ENCODE measurements at regions of chr11 and their contacts with region 1.

Region 1: DNA sequence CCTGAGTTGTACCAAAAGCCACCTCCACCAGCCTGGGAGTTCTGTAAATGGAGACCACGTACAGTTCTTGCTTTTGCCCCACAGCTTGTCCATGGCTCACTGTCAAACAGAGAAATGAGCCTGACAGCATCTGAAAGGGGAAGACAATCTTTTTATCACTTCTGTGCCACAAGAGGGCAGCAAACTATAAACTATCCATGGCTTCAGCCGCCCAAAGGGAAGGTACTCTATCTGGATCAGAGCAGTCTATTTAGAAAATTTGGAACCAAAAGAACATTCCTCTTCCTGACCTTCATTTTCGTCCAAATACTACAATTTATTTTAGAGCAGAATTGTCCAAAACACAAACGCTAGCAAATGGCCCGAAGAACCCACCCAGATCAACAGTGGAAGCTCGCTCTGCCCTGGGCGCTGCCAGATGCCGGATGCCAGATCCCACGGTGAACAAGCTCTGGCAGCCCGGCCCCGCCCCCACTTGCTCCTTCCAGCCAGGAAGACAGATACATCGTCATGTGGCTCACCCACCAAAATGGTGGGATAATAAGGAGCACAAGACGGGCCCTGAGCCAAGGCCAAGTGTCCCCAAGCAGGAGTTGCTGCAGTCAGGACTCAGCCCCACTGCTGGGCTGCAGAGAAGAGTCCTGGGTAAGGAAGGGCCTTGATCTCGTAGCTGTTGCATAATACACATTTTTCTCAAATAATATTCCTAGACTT is 23.9 kb upstream of the SCGB1A1 start:
- DNase-seq: peak; percentile 75
- H3K4me3 ChIP-seq: peak overlapping the region; percentile 42 to 47 (median 42)
- H3K27ac ChIP-seq: no peak overlapping the region
- H3K4me1 ChIP-seq: peaks cover 9% of the 10 kb centered on the region
- H3K27me3 ChIP-seq: no peaks in the 10 kb centered on the region
- CTCF ChIP-seq: peak; percentile 52 to 62

Region 2: DNA sequence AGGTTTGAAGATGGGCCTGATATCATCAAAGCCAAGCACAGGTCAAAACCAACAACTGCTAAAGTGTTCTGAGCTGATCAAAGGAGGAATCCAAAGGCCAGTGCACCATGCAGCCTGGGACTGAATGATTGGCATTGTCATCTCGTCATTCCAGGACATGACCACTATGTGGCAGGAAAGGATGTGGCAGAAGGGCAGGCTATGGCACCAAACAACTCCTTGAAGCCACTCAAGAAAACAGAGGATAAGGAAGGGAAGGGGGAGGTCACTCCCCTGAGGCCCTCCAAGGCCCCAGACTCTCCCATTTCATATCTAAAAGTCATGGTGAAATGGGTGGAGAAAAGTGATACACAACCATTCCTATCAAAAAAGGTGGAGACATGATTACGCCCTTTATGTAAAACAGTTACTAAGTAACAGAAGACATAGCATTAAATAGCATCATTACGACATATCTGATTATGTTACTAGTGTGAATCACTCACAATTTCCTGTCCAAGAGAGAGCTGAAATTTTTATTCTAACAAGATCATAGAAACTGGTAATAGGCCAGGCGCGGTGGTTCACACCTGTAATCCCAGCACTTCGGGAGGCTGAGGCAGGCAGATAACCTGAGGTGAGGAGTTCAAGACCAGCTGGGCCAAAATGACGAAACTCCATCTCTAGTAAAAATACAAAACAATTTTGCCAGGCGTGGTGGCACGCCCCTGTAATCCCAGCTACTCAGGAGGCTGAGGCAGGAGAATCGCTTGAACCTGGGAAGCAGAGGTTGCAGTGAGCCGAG is 102.3 kb after region 1 on chr11:
- CTCF ChIA-PET with region 1: interaction called, 4 read pairs
- dilution Hi-C with region 1: loop called (anchors 5 kb)
- in situ Hi-C with region 1: no loop called
- intact Hi-C with region 1: no loop called
- DNase-seq: peak; percentile 84
- H3K4me3 ChIP-seq: no peak overlapping the region
- H3K27ac ChIP-seq: peak overlapping the region; percentile 66
- H3K4me1 ChIP-seq: peaks cover 35% of the 10 kb centered on the region
- H3K27me3 ChIP-seq: no peaks in the 10 kb centered on the region
- CTCF ChIP-seq: peak; percentile 44 to 63

Region 3: DNA sequence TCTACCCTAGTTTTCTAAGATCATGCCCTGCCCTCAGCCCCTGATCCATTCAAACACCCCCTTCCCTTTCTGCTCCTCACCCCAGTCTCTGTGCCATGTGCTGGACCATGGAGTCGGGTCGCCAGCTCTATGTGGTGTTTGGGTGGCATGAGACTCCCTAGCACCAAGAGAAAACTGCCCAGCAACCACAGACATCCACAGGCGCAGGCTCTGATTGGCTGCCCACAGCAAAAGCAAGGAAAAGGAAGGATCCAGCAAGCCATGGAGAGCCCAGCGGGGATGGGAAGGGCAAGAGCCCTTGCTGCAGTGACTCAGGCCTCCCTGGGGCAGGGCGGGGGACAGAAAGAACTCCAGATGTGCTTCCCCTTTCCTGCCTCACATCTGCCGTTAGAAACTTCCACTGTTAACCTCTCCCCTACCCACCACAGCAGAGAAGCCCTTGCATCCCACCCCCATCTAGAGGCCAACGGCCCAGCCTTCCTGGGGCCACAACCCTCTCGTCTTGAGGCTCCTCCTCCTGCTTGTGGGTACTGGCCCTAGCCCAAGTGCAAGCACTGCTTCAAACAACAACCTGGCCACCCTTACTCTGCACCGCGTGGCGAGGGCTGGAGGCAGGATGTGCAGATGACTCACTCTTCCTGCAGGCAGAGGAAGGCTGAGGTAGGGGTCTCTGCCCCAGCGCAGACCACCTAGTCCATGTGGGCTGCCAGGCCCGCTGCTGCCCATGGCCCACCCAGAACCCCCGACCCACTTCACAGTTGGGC is 161.3 kb after region 1 on chr11:
- CTCF ChIA-PET with region 1: interaction called, 5 read pairs
- dilution Hi-C with region 1: no loop called
- in situ Hi-C with region 1: loop called (anchors 10 kb)
- intact Hi-C with region 1: loop called (anchors 1 kb)
- DNase-seq: peak; percentile 96
- H3K4me3 ChIP-seq: peak overlapping the region; percentile 1 to 20 (median 8)
- H3K27ac ChIP-seq: peak overlapping the region; percentile 67
- H3K4me1 ChIP-seq: peaks cover 99% of the 10 kb centered on the region
- H3K27me3 ChIP-seq: no peaks in the 10 kb centered on the region
- CTCF ChIP-seq: no peak

Region 4: GRCh38 chr11:62694455-62695167 is 299.6 kb after region 1 on chr11:
- CTCF ChIA-PET with region 1: interaction called, 7 read pairs
- dilution Hi-C with region 1: no loop called
- in situ Hi-C with region 1: loop called (anchors 10 kb)
- intact Hi-C with region 1: loop called (anchors 1 kb)
- DNase-seq: peak; percentile 52
- H3K4me3 ChIP-seq: no peak overlapping the region
- H3K27ac ChIP-seq: no peak overlapping the region
- H3K4me1 ChIP-seq: no peaks in the 10 kb centered on the region
- H3K27me3 ChIP-seq: no peaks in the 10 kb centered on the region
- CTCF ChIP-seq: peak; percentile 79 to 87

Region 5: DNA sequence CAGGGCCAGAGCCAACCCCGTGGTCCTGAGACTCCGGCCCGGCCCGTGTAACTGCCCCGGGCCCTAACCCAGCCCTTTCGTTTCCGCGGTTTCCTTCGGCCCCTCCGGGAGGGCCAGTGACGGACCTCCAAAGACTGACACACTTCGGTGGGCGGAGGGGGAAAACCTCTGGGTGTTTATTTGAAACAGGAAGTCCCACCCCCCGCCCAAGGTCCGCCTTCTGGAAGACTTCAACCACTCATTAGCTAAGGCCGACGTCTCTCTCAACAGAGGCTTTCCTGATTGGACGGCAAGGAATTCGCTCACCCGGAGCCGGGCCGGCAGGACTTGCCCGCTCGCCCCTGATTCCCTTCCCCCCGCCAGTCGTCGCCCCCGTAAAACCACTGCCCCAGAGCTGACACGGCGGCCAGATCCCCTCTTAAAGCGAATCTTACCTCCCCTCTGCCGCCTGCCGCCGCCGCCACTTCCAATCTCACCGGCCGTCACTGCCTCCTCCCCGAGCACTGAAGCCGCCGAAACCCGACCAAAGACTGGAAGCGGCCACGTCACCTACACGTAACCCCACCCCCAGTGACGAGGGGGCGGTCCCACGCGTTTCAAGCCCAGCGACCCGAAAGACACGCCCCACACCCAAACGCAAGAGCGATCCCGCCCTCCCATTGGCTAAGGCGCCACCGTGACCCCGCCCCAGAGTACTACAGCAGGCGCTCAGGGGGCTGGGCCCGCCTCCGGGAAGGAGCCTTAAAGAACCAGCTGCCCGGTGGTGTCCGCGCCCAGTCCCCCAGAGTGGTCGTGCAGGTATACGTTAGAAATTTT is 436.7 kb after region 1 on chr11 and contains the start of gene STX5:
- CTCF ChIA-PET with region 1: no interaction called
- dilution Hi-C with region 1: no loop called
- in situ Hi-C with region 1: loop called in 1 of 2 experiments (anchors 25 kb)
- intact Hi-C with region 1: no loop called
- DNase-seq: peak; percentile 97
- H3K4me3 ChIP-seq: peak within 1 kb of the TSS; percentile 59 to 84 (median 75)
- H3K27ac ChIP-seq: peak within 1 kb of the TSS; percentile 87
- H3K4me1 ChIP-seq: peaks cover 19% of the 10 kb centered on the region
- H3K27me3 ChIP-seq: no peaks in the 10 kb centered on the region
- CTCF ChIP-seq: no peak
- total RNA-seq, gene STX5: 26.7 to 44.1 TPM

Region 6: DNA sequence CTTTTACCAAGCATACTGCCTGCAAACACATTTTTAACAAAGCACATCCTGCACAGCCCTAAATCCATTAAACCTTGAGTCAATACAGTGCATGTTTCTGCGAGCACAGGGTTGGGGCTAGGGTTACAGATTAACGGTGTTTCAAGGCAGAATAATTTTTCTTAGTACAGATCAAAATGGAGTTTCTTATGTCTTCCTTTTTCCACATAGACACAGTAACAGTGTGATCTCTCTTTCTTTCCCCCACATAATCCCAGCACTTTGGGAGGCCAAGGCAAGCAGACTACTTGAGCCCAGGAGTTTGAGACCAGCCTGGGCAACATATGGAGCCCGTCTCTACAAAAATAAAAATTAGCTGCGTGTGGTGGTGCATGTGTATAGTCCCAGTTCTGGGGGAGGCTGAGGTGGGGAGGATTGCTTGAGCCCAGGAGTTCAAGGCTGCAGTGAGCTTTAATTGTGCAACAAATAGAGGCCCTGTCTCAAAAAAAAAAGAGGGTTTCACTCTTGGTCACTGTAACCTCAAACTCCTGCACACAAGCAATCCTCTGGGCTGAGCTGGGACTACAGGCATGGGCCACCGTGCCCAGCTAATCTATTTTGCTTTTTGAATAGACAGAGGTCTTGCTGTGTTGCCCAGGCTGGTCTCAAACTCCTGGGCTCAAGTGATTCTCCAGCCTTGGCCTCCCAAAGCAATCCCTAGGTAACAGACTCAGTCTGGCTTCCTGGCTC is 466.0 kb after region 1 on chr11:
- CTCF ChIA-PET with region 1: no interaction called
- dilution Hi-C with region 1: loop called (anchors 25 kb)
- in situ Hi-C with region 1: loop called in 1 of 2 experiments (anchors 25 kb)
- intact Hi-C with region 1: loop called (anchors 10 kb)
- DNase-seq: no peak
- H3K4me3 ChIP-seq: no peak overlapping the region
- H3K27ac ChIP-seq: no peak overlapping the region
- H3K4me1 ChIP-seq: peaks cover 7% of the 10 kb centered on the region
- H3K27me3 ChIP-seq: no peaks in the 10 kb centered on the region
- CTCF ChIP-seq: no peak

Region 7: GRCh38 chr11:63698976-63699733 is 1304.2 kb after region 1 on chr11:
- CTCF ChIA-PET with region 1: no interaction called
- dilution Hi-C with region 1: no loop called
- in situ Hi-C with region 1: no loop called
- intact Hi-C with region 1: no loop called
- DNase-seq: no peak
- H3K4me3 ChIP-seq: no peak overlapping the region
- H3K27ac ChIP-seq: no peak overlapping the region
- H3K4me1 ChIP-seq: no peaks in the 10 kb centered on the region
- H3K27me3 ChIP-seq: no peaks in the 10 kb centered on the region
- CTCF ChIP-seq: no peak

Measured in mammary epithelial cell (primary cell).